ENCODE measurements at regions of chr6 and their contacts with region 1.

Region 1: GRCh38 chr6:31546962-31547726 is at the start of gene NFKBIL1:
- DNase-seq: peak; percentile 88
- H3K4me3 Mint-ChIP-seq: peak within 1 kb of the TSS; percentile 87
- H3K27ac Mint-ChIP-seq: peak within 1 kb of the TSS; percentile 82
- H3K4me1 Mint-ChIP-seq: peaks cover 36% of the 10 kb centered on the region
- H3K27me3 Mint-ChIP-seq: peaks cover 3% of the 10 kb centered on the region
- total RNA-seq, gene NFKBIL1: 18.2 and 18.9 TPM in 2 replicates

Region 2: DNA sequence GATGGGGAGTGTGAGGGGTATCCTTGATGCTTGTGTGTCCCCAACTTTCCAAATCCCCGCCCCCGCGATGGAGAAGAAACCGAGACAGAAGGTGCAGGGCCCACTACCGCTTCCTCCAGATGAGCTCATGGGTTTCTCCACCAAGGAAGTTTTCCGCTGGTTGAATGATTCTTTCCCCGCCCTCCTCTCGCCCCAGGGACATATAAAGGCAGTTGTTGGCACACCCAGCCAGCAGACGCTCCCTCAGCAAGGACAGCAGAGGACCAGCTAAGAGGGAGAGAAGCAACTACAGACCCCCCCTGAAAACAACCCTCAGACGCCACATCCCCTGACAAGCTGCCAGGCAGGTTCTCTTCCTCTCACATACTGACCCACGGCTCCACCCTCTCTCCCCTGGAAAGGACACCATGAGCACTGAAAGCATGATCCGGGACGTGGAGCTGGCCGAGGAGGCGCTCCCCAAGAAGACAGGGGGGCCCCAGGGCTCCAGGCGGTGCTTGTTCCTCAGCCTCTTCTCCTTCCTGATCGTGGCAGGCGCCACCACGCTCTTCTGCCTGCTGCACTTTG is 28.3 kb after region 1 on chr6 and contains the start of gene TNF:
- intact Hi-C with region 1: loop called (anchors 1 kb)
- DNase-seq: peak; percentile 85
- H3K4me3 Mint-ChIP-seq: peak within 1 kb of the TSS; percentile 92
- H3K27ac Mint-ChIP-seq: peak within 1 kb of the TSS; percentile 81
- H3K4me1 Mint-ChIP-seq: peaks cover 81% of the 10 kb centered on the region
- H3K27me3 Mint-ChIP-seq: peaks cover 2% of the 10 kb centered on the region
- total RNA-seq, gene TNF: 427 and 430 TPM in 2 replicates

Region 3: GRCh38 chr6:31597006-31597405 is 49.9 kb after region 1 on chr6:
- intact Hi-C with region 1: loop called (anchors 1 kb)
- DNase-seq: no peak
- H3K4me3 Mint-ChIP-seq: no peak overlapping the region
- H3K27ac Mint-ChIP-seq: no peak overlapping the region
- H3K4me1 Mint-ChIP-seq: peaks cover 52% of the 10 kb centered on the region
- H3K27me3 Mint-ChIP-seq: no peaks in the 10 kb centered on the region

Region 4: DNA sequence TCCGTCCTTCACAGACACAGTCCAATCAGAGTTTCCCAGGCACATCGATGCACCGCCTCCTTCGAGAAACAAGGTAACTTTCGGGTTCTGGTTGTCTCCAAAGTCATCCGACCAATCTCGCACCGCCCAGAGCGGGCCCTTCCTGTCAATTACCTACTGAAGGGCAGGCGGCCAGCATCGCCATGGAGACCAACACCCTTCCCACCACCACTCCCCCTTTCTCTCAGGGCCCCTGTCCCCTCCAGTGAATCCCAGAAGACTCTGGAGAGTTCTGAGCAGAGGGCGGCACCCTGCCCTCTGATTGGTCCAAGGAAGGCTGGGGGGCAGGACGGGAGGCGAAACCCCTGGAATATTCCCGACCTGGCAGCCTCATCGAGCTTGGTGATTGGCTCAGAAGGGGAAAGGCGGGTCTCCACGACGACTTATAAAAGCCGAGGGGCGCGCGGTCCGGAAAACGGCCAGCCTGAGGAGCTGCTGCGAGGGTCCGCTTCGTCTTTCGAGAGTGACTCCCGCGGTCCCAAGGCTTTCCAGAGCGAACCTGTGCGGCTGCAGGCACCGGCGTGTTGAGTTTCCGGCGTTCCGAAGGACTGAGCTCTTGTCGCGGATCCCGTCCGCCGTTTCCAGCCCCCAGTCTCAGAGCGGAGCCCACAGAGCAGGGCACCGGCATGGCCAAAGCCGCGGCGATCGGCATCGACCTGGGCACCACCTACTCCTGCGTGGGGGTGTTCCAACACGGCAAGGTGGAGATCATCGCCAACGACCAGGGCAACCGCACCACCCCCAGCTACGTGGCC is 280.3 kb after region 1 on chr6 and contains the start of gene HSPA1B:
- intact Hi-C with region 1: loop called (anchors 1 kb)
- DNase-seq: peak; percentile 95
- H3K4me3 Mint-ChIP-seq: peak within 1 kb of the TSS; percentile 83
- H3K27ac Mint-ChIP-seq: peak within 1 kb of the TSS; percentile 93
- H3K4me1 Mint-ChIP-seq: peaks cover 41% of the 10 kb centered on the region
- H3K27me3 Mint-ChIP-seq: no peaks in the 10 kb centered on the region
- total RNA-seq, gene HSPA1B: 152 and 155 TPM in 2 replicates

Region 5: DNA sequence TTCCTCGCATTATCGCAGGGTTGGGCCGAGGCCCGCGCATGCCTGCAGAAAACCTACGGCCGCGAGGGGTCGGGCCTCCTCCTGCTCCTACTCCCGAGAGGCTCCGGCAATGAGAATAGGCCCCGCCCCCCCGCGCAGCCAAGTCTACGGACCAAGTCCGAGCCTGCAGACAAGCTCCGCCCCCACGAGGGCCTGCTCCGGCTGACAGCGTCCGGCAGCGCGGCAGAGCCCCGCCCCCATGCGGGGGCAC is 648.4 kb after region 1 on chr6:
- intact Hi-C with region 1: loop called (anchors 1 kb)
- DNase-seq: peak; percentile 100
- H3K4me3 Mint-ChIP-seq: peak overlapping the region; percentile 97
- H3K27ac Mint-ChIP-seq: peak overlapping the region; percentile 98
- H3K4me1 Mint-ChIP-seq: peaks cover 48% of the 10 kb centered on the region
- H3K27me3 Mint-ChIP-seq: peaks cover 2% of the 10 kb centered on the region

Measured in activated T-helper 1 cell treated with anti-CD3 and anti-CD28 coated beads, Interleukin-12 subunit alpha, Interleukin-12 subunit beta, Interleukin-2, Interleukin-4 antibody, amounts not matched to agents 30 ng/mL and 10 ng/mL and 1 ng/mL, durations not matched to agents 14 hours and 24 hours and 36 hours (primary cell).